ENCODE measurements at regions of chr20 and their contacts with region 1.

Region 1: DNA sequence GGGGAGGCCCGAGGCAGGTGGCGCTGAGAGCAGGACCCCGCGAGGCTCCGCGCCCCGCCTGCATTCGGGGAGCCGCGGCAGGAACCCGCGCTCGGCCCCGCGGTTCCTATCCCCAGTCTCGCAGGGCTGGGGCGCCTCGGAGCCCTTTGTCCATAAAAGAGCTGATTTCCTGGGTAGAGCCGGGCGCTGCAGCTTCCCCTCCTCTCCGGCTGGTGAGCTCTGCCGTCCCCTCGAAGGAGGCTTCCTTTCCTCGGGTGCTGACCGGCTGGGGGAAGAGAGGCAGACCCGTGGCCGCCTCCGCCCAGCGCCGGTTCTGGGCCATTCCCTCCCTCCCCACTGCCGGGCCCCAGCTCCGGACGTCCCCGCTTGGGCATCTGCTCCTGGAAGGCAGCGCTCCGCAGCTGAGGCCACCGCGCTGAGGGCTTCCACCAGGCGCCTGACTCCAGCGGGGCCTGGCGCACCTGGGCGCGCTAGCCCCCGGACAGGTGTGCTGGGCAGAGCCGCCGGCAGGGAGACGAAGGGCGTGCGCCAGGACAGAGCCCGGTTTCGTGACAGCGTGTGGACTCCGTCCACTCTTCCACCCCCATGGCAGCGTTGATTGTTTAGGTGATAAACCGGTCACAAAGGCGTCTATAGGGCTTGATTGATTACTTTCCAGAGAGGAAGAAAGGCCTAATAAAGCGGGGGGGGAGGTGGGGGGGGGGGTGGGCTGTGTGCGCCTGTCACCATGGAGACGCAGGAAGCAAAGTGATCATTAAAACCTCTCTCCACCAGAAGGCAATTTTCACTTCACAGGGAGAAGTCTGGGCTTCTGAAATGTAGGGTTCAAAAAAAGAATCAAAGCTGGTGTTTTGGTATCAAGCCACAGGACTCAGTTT is 1.1 kb downstream of the PHACTR3 start:
- DNase-seq: no peak
- CTCF ChIP-seq: no peak

Region 2: GRCh38 chr20:59428051-59428830 is 177.2 kb before region 1 on chr20:
- in situ Hi-C with region 1: no loop called
- DNase-seq: no peak
- CTCF ChIP-seq: no peak

Region 3: GRCh38 chr20:59718751-59719150 is 113.3 kb after region 1 on chr20:
- in situ Hi-C with region 1: no loop called
- DNase-seq: no peak
- CTCF ChIP-seq: no peak

Region 4: DNA sequence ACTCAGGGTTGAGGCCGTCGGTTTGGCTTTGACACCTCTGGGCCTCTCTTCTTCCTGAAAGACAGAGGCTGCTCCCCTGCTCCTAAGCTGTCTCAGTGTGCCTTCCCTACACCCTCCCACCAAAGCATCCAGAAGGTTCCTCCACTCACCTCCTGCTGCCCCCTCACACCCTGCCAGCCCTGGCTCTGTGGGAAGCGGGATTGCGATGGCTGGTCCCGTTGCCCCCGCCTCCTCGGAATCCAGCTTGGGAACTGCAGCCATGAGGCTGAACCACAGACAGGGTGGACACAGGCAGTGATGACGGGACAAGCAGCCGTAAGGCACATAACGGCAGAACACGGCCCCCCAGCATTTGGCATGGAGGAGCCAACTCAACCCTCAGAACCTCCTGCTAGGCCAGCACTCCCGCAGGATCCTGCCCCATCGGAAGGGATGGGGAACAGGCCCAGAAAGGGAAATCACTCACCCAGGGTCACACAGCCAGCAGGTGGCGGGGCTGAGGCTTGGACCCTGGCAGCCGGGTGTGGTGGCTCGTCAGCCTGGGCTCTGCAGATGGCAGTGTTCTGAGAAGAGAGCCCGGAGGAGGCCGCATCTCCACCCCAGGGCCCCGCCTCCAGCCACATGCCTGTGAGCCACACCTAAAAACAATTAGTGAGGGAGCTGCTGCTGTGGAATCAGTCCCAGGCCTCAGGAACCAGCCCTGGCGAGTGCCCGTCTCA is 138.5 kb after region 1 on chr20:
- in situ Hi-C with region 1: loop called (anchors 25 kb)
- DNase-seq: no peak
- CTCF ChIP-seq: no peak

Region 5: GRCh38 chr20:59835448-59836395 is 230.3 kb after region 1 on chr20:
- in situ Hi-C with region 1: no loop called
- DNase-seq: peak; percentile 23
- CTCF ChIP-seq: no peak

Measured in GM13977 (cell line).